Ascending aorta (tissue), 2 donors: ENCODE measurements at regions of chr17 and their contacts with region 1.

Region 1: DNA sequence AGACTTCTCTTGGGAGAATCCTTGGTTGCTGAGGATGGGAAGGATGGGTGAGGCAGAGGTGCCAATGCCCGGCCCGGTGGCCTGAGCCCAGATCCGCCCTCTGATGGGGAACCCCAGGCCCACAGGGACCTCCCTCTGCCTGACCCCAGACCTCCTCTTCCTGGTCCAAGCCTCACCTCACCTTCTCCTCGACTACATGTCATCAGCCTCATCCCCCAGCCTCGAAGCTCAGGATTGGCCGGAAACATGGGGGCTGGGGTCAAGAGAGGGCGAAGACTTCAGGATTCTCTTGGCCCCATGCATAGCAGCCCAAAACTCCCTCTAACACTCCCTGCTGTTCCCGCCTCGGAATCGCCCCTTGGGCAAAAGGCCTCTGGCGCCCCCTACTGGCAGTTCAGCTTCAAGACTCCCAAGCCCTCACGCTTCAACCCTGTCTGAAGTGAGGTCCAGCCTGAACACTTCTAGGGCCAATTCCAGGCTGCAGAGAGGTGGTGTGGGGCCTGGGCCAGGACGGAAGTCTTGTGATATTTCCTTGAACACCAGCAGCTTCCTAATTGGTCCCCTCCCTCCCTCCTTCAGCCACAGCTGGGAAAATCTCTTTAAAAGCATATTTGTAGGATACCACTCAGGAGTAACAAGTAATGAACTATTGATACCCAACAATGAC is 47.2 kb downstream of the ARHGAP27 start:
- DNase-seq: peak; percentile 44 to 90
- H3K4me3 ChIP-seq: no peak overlapping the region
- H3K27ac ChIP-seq: no peak overlapping the region
- H3K4me1 ChIP-seq: no peaks in the 10 kb centered on the region
- H3K27me3 ChIP-seq: no peaks in the 10 kb centered on the region
- CTCF ChIP-seq: peak; percentile 95 to 99 (median 98)

Region 2: GRCh38 chr17:45115871-45116724 is 269.4 kb before region 1 on chr17:
- intact Hi-C with region 1: no loop called
- DNase-seq: no peak
- H3K4me3 ChIP-seq: no peak overlapping the region
- H3K27ac ChIP-seq: peak overlapping the region; percentile 41 to 81
- H3K4me1 ChIP-seq: peaks cover under 1 to 15% of the 10 kb centered on the region in 2 donors
- H3K27me3 ChIP-seq: no peaks in the 10 kb centered on the region
- CTCF ChIP-seq: no peak

Region 3: DNA sequence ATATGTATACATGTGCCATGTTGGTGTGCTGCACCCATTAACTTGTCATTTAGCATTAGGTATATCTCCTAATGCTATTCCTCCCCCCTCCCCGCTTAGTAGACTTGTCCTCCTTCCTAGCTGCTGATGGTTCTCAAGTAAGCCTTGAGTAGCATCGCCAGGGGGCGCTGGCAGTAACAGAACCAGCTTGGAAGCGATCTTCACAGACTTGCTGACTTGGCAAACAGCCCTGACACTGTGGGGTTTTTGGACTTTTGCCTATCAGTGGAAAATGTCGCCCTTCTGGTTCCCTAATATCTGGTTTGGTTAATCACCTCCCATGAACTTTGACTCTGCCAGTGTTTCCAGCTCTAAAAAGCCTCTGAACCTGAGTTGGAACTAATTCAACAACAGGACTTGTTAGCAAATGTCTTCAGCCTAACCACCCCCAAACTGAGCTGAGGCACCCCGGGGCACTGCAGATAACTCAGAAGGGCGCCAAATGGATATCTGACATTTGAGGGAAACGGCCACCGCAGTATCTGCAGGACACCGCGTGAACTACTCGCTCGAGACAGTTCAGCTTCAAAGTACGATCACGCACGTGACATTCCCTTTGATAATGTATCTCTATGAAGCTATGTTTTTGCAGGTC is 108.1 kb before region 1 on chr17:
- intact Hi-C with region 1: loop called (anchors 1 kb)
- DNase-seq: peak; percentile 73 to 95
- H3K4me3 ChIP-seq: peak overlapping the region in 1 of 2 donors; percentile 42
- H3K27ac ChIP-seq: peak overlapping the region in 1 of 2 donors; percentile 40
- H3K4me1 ChIP-seq: peaks cover 0 to 11% of the 10 kb centered on the region in 2 donors
- H3K27me3 ChIP-seq: no peaks in the 10 kb centered on the region
- CTCF ChIP-seq: peak; percentile 80 to 86 (median 85)